ENCODE measurements at regions of chr2 and their contacts with region 1.

Region 1: GRCh38 chr2:15955295-15956166 is 15.2 kb downstream of the MYCN start:
- DNase-seq: no peak
- H3K4me3 ChIP-seq: no peak overlapping the region
- H3K27ac ChIP-seq: no peak overlapping the region
- H3K4me1 ChIP-seq: peaks cover 6 to 18% (median 11%) of the 10 kb centered on the region in 4 experiments
- H3K27me3 ChIP-seq: no peaks in the 10 kb centered on the region
- CTCF ChIP-seq: no peak
- EP300 ChIP-seq: no peak
- POLR2A ChIP-seq: no peak
- RAD21 ChIP-seq: no peak

Region 2: DNA sequence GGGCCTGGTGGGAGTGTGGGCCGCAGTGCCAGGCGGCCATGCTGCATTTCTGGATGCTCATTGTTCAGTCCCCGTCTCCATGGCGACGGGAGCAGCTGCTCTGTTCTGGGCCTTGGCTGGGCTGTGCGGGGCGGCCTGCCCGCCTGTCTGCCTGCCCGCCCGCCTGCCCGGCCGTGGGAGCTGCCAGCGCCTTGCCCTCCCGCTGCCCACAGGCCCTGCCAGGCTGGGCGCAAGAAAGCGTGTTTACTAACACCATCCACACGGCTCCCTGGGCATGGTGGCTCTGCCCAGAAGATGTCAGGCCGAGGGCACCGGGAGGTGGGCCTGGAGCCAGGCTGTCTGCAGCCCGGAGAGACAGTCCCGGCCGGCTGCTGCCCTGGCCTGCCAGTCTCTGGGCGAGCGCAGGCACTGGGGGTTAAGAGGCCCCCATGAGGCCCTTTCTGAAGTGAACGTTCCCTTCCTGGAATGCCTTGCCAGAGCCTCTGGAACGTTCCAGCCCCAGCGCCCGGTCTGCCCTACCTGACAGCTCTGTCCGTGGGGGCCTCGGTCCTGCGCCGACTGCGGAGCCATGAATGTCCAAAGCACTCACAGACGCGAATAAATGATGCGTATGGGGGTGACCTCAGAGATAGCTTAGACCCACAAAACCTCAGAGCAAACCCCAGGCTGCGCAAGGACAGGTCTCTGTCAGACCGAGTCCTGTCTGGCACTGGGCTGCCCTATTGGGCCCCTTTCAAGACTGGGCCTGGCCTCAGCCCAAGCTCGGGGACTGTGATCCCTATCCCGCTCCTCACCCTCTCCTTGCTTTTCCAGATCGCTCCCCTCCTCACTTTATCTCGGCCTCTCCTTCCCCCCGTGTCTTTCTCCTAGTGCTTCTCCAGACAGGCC is 29.1 kb after region 1 on chr2:
- CTCF ChIA-PET with region 1: interaction called, 11 read pairs
- POLR2A ChIA-PET with region 1: interaction called, 8 read pairs
- DNase-seq: peak in 1 of 2 experiments; percentile 64
- H3K4me3 ChIP-seq: no peak overlapping the region
- H3K27ac ChIP-seq: no peak overlapping the region
- H3K4me1 ChIP-seq: peaks cover 2 to 17% (median 10%) of the 10 kb centered on the region in 4 experiments; a peak in 5 of 7 replicates
- H3K27me3 ChIP-seq: peaks cover 0 to 1% (median 0%) of the 10 kb centered on the region in 4 experiments; a peak in 2 of 7 replicates
- CTCF ChIP-seq: no peak
- EP300 ChIP-seq: no peak
- POLR2A ChIP-seq: no peak
- RAD21 ChIP-seq: no peak

Measured in H1 (cell line).